ENCODE measurements at regions of chr1 and their contacts with region 1.

Region 1: GRCh38 chr1:30489737-30490389 is 233.5 kb downstream of the MATN1 start:
- DNase-seq: no peak
- ATAC-seq: no peak
- H3K4me3 ChIP-seq: no peak overlapping the region
- H3K27ac ChIP-seq: no peak overlapping the region
- H3K4me1 ChIP-seq: no peaks in the 10 kb centered on the region
- H3K27me3 ChIP-seq: no peaks in the 10 kb centered on the region
- CTCF ChIP-seq: no peak

Region 2: GRCh38 chr1:30099587-30100523 is 390.0 kb before region 1 on chr1:
- CTCF ChIA-PET with region 1: no interaction called
- POLR2A ChIA-PET with region 1: no interaction called
- in situ Hi-C with region 1: no loop called
- intact Hi-C with region 1: loop called (anchors 5 kb)
- DNase-seq: no peak
- ATAC-seq: no peak
- H3K4me3 ChIP-seq: no peak overlapping the region
- H3K27ac ChIP-seq: no peak overlapping the region
- H3K4me1 ChIP-seq: no peaks in the 10 kb centered on the region
- H3K27me3 ChIP-seq: no peaks in the 10 kb centered on the region; the same call in 1 of the 2 replicates
- CTCF ChIP-seq: no peak

Region 3: DNA sequence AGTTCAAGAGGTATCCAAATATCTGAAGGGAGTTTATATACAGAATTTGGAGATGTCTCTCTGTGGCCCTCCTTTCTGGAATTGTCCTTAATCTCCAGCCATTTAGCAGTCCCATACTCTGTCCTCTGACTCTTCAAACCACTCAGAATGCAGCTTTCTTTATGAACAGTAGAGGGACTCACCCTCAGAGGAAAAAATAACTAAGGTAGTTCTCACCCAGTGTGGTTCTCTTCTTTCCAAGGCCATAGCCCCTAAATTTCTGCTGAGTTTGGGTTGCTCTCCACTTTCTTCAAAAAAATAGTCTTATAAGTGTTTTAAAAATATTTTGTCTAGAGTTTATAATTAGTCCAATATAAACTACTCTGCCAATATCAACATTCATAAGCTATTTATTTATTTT is 136.2 kb before region 1 on chr1:
- CTCF ChIA-PET with region 1: no interaction called
- POLR2A ChIA-PET with region 1: no interaction called
- in situ Hi-C with region 1: no loop called
- intact Hi-C with region 1: no loop called
- DNase-seq: no peak
- ATAC-seq: no peak
- H3K4me3 ChIP-seq: no peak overlapping the region
- H3K27ac ChIP-seq: no peak overlapping the region
- H3K4me1 ChIP-seq: no peaks in the 10 kb centered on the region
- H3K27me3 ChIP-seq: peaks cover 11% of the 10 kb centered on the region; the same call in 1 of the 2 replicates
- CTCF ChIP-seq: peak; percentile 39; the same call in 1 of the 2 replicates

Region 4: GRCh38 chr1:30451532-30452125 is 38.2 kb before region 1 on chr1:
- CTCF ChIA-PET with region 1: no interaction called
- POLR2A ChIA-PET with region 1: no interaction called
- in situ Hi-C with region 1: no loop called
- intact Hi-C with region 1: no loop called
- DNase-seq: no peak
- ATAC-seq: no peak
- H3K4me3 ChIP-seq: no peak overlapping the region
- H3K27ac ChIP-seq: no peak overlapping the region
- H3K4me1 ChIP-seq: no peaks in the 10 kb centered on the region
- H3K27me3 ChIP-seq: no peaks in the 10 kb centered on the region
- CTCF ChIP-seq: no peak

Region 5: DNA sequence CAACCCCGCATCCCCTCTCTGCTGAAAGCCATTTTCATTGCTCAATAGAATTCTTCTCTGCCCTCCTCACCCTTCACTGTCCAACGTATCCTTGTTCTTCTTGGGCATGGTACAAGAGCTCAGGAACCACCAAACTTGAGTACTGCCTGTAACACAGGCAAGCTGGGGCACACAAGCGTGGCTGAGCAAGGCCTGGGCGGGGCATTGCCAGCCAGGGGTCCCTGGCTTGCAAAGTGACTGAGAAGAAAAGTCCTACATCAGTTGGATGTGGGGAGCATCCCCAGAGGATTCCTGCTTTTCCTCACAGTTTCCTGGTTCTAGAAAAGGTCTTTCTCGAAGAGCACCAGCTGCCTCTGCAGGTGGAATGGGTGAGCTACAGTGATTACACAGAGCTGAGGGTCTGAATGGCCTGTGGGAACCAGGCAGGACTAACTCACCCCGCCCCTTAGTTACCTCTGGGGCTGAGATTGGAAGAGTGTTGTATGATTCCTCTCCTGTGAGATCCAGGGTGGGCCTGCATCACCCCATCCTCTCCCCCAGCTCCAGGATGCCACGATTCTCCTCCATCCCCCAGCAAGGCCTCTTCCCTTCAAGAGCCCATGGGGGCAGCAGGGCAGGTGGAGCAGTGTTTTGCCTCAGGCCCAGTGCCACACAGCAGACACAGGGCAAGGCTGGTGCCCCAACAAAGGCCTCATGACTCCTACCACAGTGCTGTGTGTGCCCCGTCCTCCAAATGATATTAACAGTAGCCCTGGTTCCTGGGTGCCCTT is 111.6 kb after region 1 on chr1:
- CTCF ChIA-PET with region 1: no interaction called
- POLR2A ChIA-PET with region 1: no interaction called
- in situ Hi-C with region 1: no loop called
- intact Hi-C with region 1: no loop called
- DNase-seq: no peak
- ATAC-seq: no peak
- H3K4me3 ChIP-seq: no peak overlapping the region
- H3K27ac ChIP-seq: no peak overlapping the region
- H3K4me1 ChIP-seq: no peaks in the 10 kb centered on the region
- H3K27me3 ChIP-seq: no peaks in the 10 kb centered on the region
- CTCF ChIP-seq: no peak

Measured in Panc1 (cell line).